Spleen (tissue), 13 donors: ENCODE measurements at regions of chr15 and their contacts with region 1.

Region 1: GRCh38 chr15:74540761-74541493 is at the start of gene ARID3B:
- DNase-seq: peak; percentile 98
- H3K4me3 ChIP-seq: peak within 1 kb of the TSS; percentile 79 to 92 (median 87)
- H3K27ac ChIP-seq: peak within 1 kb of the TSS; percentile 77 to 95 (median 92)
- H3K4me1 ChIP-seq: peaks cover 24 to 64% (median 47%) of the 10 kb centered on the region in 6 donors
- H3K27me3 ChIP-seq: no peaks in the 10 kb centered on the region
- CTCF ChIP-seq: peak in 2 of 11 experiments; percentile 14 to 32
- POLR2A ChIP-seq: peak in 1 of 3 donors; percentile 45
- total RNA-seq, gene ARID3B: 14.5 to 25.2 (median 16.3) TPM

Region 2: GRCh38 chr15:74615508-74616365 is 74.8 kb after region 1 on chr15 and contains the start of gene CLK3:
- intact Hi-C with region 1: loop called (anchors 10 kb)
- DNase-seq: peak; percentile 100
- H3K4me3 ChIP-seq: peak within 1 kb of the TSS; percentile 68 to 98 (median 87)
- H3K27ac ChIP-seq: peak within 1 kb of the TSS; percentile 95 to 99 (median 98)
- H3K4me1 ChIP-seq: peaks cover 19 to 63% (median 45%) of the 10 kb centered on the region in 6 donors
- H3K27me3 ChIP-seq: no peaks in the 10 kb centered on the region
- CTCF ChIP-seq: peak in 1 of 11 experiments; percentile 7
- POLR2A ChIP-seq: peak in 2 of 3 donors; percentile 34 to 39
- total RNA-seq, gene CLK3: 97.8 to 229 (median 109) TPM

Region 3: GRCh38 chr15:74716644-74717043 is 175.7 kb after region 1 on chr15:
- intact Hi-C with region 1: no loop called
- DNase-seq: no peak
- H3K4me3 ChIP-seq: no peak overlapping the region
- H3K27ac ChIP-seq: peak overlapping the region in 2 of 8 donors; percentile 32 to 48
- H3K4me1 ChIP-seq: peaks cover 0 to 12% (median 2%) of the 10 kb centered on the region in 6 donors
- H3K27me3 ChIP-seq: no peaks in the 10 kb centered on the region
- CTCF ChIP-seq: no peak
- POLR2A ChIP-seq: no peak